Activated CD8-positive, alpha-beta T cell treated with anti-CD3 and anti-CD28 coated beads, Interleukin-2, amount 10 ng/mL, durations not matched to agents 7 days and 5 days (primary cell): ENCODE measurements at regions of chr7 and their contacts with region 1.

Region 1: DNA sequence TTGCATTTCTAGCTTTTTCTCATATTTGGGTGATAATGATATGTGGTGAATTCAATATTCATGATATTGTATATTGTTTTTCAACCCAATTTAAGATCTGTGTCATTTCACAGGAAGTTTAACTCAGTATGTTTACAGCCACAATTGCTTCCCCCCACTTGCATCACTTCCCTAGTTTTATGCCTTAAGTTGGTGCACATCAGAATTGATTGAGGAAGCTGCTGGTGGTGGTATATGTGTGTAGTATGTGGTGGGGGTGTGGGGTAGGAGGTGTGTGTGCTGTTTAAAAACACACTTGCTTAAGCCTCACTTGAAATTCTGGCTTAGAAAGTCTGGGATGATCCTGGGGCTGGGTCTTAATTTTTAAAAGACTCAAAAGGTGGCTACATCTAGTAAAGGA is 245.1 kb upstream of the AOAH start:
- DNase-seq: peak; percentile 51
- ATAC-seq: no peak
- H3K4me3 Mint-ChIP-seq: peak overlapping the region; percentile 16
- H3K27ac Mint-ChIP-seq: peak overlapping the region; percentile 57
- H3K4me1 Mint-ChIP-seq: peaks cover 35% of the 10 kb centered on the region
- H3K27me3 Mint-ChIP-seq: no peaks in the 10 kb centered on the region

Region 2: GRCh38 chr7:36979810-36980248 is 10.5 kb after region 1 on chr7:
- CTCF ChIA-PET with region 1: interaction called, 24 read pairs
- POLR2A ChIA-PET with region 1: no interaction called
- DNase-seq: no peak
- ATAC-seq: no peak
- H3K4me3 Mint-ChIP-seq: no peak overlapping the region
- H3K27ac Mint-ChIP-seq: no peak overlapping the region
- H3K4me1 Mint-ChIP-seq: peaks cover 9% of the 10 kb centered on the region
- H3K27me3 Mint-ChIP-seq: no peaks in the 10 kb centered on the region

Region 3: DNA sequence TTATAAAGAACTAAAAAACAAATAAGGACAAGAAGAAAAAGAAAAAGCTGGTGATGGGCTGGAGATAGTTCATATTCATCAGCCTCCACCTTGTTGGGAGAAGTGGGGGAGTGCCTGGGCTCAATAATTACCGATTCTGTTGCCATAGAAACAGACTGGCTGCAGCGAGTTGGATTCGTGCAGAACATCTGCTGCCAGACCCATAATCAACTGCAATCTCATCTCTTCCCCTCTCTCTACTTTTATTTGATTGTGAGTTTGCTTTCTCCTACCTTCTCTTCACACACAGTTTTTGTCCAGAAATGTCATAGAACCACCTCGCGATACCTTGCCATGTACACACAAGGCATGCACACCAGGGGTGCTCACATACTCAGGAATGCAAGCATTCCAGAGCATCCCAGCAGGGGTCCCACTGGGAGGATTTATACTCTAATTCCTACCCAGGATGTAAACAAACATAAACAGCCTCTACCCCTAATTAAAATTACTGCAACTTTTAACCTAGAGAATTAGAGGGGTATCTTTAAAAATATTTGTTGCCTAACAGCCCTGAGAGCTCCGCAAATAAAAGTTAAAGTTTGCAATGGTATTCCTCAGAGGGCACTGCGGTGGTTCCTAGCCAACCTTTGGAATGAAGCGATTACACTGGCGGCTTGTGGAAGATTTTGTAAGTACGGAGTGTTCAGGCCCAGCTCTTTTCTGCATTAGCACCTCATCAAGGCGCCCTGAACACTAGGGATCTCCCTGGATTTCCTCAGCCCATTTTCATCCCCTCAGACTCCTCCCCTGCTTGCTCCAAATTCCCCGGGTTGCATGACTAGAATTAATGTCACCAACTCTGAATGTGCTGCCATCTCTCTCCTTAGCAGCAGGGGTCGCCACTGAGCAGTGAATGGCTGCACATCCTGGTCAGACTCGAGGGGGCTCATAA is 17.3 kb after region 1 on chr7:
- CTCF ChIA-PET with region 1: interaction called, 24 read pairs
- POLR2A ChIA-PET with region 1: no interaction called
- DNase-seq: peak; percentile 70
- ATAC-seq: no peak
- H3K4me3 Mint-ChIP-seq: no peak overlapping the region
- H3K27ac Mint-ChIP-seq: no peak overlapping the region
- H3K4me1 Mint-ChIP-seq: peaks cover 26% of the 10 kb centered on the region
- H3K27me3 Mint-ChIP-seq: no peaks in the 10 kb centered on the region